Activated naive CD4-positive, alpha-beta T cell treated with anti-CD3 and anti-CD28 coated beads for 36 hours (primary cell): ENCODE measurements at regions of chr2 and their contacts with region 1.

Region 1: DNA sequence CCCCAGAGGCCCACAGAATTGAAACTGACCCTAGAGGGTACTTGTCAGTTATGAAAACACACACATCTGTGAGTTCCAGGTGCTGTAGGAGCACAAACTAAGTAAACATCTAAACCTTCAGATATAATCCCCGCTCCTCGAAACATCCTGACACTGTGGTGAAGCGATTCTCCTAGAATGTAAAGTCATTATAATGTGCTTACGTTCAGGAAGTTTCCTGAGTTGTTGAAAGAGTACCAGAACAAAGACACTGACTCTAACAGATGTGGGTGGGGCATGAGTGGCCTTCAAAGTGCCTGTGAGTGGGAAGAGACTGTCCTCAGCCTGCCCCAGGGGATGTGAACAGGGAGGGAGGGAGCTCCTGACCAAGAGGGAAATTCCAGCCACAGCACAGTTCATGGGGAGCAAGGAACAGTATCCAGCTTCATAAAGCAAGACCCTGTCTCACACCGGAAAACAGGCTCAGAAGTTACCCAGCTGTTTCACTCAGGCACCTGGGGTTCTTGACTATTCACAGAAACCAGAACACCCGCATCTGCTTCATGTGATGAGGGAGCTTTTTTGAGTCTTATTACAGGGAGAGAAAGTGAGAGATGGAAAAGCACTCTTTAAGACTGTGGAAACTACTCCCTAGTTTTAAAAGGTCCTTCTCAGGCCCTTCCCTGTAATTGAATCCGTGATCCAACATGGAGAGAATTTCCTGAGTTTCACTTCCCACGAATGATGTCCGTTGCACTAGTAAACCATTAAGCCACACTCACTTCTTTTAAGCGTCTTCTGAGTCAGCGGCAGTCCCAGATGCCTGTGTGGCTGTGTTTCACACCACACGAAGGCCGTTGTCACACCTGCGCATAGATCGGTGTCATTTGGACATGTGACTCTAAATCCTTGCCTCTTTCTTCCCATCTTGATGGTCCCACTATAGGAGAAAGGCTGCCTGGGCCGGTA is 88.6 kb upstream of the EML6 start:
- DNase-seq: peak; percentile 49
- H3K4me3 Mint-ChIP-seq: peak overlapping the region; percentile 3
- H3K27ac Mint-ChIP-seq: peak overlapping the region; percentile 87
- H3K4me1 Mint-ChIP-seq: peaks cover 34% of the 10 kb centered on the region
- H3K27me3 Mint-ChIP-seq: no peaks in the 10 kb centered on the region

Region 2: GRCh38 chr2:54589340-54590215 is 45.3 kb before region 1 on chr2:
- CTCF ChIA-PET with region 1: interaction called, 3 read pairs
- intact Hi-C with region 1: loop called (anchors 1 kb)
- DNase-seq: peak; percentile 76
- H3K4me3 Mint-ChIP-seq: peak overlapping the region; percentile 27
- H3K27ac Mint-ChIP-seq: peak overlapping the region; percentile 90
- H3K4me1 Mint-ChIP-seq: peaks cover 85% of the 10 kb centered on the region
- H3K27me3 Mint-ChIP-seq: no peaks in the 10 kb centered on the region